Activated CD4-positive, alpha-beta T cell treated with anti-CD3 and anti-CD28 coated beads, Interleukin-2, amount 10 ng/mL, durations not matched to agents 7 days and 5 days (primary cell): ENCODE measurements at regions of chr3 and their contacts with region 1.

Region 1: GRCh38 chr3:112734718-112735350 is 93.9 kb upstream of the CCDC80 start:
- DNase-seq: peak; percentile 72
- H3K4me3 Mint-ChIP-seq: no peak overlapping the region
- H3K27ac Mint-ChIP-seq: no peak overlapping the region
- H3K4me1 Mint-ChIP-seq: peaks cover 45% of the 10 kb centered on the region
- H3K27me3 Mint-ChIP-seq: no peaks in the 10 kb centered on the region

Region 2: DNA sequence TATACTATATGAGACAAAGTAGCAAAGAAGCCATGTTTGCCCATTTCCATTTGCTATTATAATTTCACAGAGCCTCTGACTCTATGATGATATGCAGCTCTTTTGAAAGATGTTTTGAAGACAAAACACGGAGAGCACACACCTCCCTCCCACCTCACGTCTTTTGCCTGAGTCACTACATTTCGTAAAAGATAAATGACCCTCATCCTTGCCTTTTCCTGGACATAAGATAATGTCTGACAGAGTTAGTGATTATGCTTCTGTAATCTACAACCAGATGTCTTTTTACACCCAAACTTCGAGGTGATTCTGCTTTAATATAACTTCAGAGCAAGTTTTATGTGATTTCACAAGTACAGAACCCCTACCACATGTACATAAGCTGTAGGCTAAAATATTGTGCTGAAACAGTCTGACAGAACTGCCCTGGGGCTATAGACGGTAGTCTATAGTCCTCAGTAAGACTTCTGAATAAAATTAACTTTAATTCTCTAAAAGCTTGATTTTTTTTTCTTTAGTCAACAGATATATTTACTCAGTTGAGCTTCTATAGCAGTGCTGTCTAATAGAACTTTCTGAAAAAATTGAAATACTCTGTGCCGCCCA is 11.9 kb after region 1 on chr3:
- CTCF ChIA-PET with region 1: interaction called, 19 read pairs
- POLR2A ChIA-PET with region 1: no interaction called
- DNase-seq: no peak
- H3K4me3 Mint-ChIP-seq: no peak overlapping the region
- H3K27ac Mint-ChIP-seq: no peak overlapping the region
- H3K4me1 Mint-ChIP-seq: peaks cover 14% of the 10 kb centered on the region
- H3K27me3 Mint-ChIP-seq: no peaks in the 10 kb centered on the region

Region 3: DNA sequence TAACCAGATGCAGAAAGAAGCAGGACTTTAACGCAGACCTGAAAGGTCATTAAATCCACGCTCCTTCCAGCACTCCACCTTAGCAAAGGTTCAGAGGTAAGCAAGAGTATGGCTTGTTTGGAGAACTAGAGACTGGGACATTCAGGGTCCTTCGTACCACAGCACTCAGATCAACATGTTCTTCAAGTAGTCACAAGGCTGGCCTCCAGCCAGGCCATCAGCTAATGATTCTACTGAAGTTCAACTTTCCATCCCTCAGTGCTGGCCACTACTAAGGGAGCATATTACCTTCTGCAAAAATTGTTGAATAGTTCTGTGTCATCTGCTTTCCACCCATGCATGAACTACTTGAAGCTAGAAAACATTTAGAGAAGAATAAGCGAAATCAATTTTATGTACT is 94.2 kb after region 1 on chr3:
- CTCF ChIA-PET with region 1: no interaction called
- POLR2A ChIA-PET with region 1: no interaction called
- DNase-seq: no peak
- H3K4me3 Mint-ChIP-seq: no peak overlapping the region
- H3K27ac Mint-ChIP-seq: no peak overlapping the region
- H3K4me1 Mint-ChIP-seq: no peaks in the 10 kb centered on the region
- H3K27me3 Mint-ChIP-seq: no peaks in the 10 kb centered on the region

Region 4: DNA sequence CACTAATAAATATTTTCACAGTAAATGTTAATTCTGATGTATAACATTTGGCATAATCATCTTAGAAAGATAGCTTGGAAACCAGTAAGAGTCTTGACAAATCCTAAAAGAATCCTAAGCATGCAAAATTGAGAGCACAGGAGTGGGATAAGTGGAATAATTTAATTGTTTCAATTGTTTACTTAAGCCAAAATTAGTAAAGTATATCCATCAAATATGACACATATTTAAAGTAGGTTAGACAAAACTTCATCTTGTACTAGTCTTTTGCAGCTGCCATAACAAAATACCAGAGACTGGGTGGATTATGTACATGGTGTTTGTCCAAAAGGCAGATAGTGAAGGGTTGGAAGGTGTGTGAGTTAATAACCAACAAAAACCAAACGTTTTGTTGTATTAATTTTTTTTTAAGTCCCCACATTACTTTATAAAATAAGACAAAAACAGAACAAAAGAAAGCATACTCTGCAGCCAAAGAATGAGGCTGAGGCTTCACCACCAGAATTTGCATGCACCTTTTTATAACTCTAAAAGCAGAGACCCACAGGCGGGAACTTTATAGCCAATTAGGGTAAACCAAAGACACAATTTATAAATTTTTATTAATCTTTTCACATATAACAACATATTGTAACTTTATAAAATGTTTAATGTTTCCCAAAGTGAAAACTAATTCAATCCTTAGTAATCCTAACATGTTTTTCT is 153.7 kb after region 1 on chr3:
- CTCF ChIA-PET with region 1: no interaction called
- POLR2A ChIA-PET with region 1: no interaction called
- DNase-seq: no peak
- H3K4me3 Mint-ChIP-seq: no peak overlapping the region
- H3K27ac Mint-ChIP-seq: no peak overlapping the region
- H3K4me1 Mint-ChIP-seq: no peaks in the 10 kb centered on the region
- H3K27me3 Mint-ChIP-seq: no peaks in the 10 kb centered on the region

Region 5: DNA sequence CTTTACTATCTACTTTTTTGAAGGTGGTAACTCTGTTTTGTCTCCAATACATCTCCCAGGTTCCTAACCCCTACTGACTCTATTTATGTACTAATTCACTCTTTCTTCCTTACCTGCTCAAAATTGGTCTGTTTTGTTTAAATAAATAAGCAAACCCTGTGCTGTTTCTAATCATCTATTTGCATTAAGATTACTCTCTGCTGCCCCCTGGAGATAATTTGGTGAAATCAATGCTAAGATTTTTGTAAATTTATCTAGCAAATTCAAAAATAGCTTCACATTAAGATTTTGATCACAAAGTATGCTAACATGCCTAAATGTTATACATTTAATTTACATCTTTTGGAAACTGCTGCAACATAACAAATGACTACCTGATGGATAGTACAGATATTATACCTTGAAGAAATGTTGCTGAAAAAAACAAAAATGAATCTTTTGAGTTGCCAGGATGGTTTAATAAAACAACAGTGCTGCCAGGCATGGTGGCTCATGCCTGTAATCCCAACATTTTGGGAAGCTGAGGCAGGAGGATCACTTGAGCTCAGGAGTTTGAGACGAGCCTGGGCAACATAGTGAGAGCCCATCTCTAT is 244.5 kb after region 1 on chr3:
- CTCF ChIA-PET with region 1: interaction called, 14 read pairs
- POLR2A ChIA-PET with region 1: no interaction called
- DNase-seq: peak; percentile 55
- H3K4me3 Mint-ChIP-seq: no peak overlapping the region
- H3K27ac Mint-ChIP-seq: no peak overlapping the region
- H3K4me1 Mint-ChIP-seq: peaks cover 57% of the 10 kb centered on the region
- H3K27me3 Mint-ChIP-seq: no peaks in the 10 kb centered on the region